ENCODE measurements at regions of chr12 and their contacts with region 1.

Region 1: GRCh38 chr12:108514973-108515814 is at the start of gene FICD:
- DNase-seq: peak; percentile 99
- H3K4me3 Mint-ChIP-seq: peak within 1 kb of the TSS; percentile 86
- H3K27ac Mint-ChIP-seq: peak within 1 kb of the TSS; percentile 78
- H3K4me1 Mint-ChIP-seq: peaks cover 27% of the 10 kb centered on the region
- H3K27me3 Mint-ChIP-seq: no peaks in the 10 kb centered on the region
- total RNA-seq, gene FICD: 5.8 and 7.1 TPM in 2 replicates

Region 2: DNA sequence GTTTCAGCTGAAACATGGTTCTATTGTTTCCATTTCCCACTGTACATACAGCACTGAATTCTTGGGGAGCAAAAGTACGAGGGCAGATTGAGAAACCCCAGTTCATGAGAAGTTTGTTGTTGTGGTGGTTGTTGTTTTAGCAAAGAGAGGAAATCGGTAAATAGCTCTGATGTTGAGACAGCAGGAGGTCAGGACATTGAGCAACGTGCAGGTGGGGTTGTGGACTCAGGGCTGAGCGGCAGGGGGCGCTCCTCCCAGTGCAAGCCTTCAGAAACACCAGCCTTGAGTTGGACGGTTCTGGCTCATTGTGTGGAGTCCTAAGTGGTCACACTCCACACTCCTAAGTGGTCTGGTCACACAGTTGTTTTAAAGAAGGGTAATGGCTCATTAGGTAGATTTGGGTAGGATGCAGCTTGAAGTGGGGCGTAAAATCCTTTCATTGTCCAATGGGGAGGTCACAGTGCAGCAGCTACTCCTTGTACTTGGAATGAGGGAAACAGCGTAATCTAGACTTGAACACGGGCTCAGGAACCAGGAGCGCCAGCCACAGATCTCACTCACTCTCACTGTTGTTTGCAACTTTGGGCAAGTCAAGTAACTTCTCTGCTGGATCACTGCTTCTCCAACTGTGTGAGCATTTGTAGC is 844.1 kb before region 1 on chr12:
- intact Hi-C with region 1: loop called (anchors 10 kb)
- DNase-seq: peak; percentile 25
- H3K4me3 Mint-ChIP-seq: no peak overlapping the region
- H3K27ac Mint-ChIP-seq: no peak overlapping the region
- H3K4me1 Mint-ChIP-seq: peaks cover 3% of the 10 kb centered on the region
- H3K27me3 Mint-ChIP-seq: peaks cover 15% of the 10 kb centered on the region

Region 3: GRCh38 chr12:107992870-107993451 is 522.2 kb before region 1 on chr12:
- intact Hi-C with region 1: loop called (anchors 5 kb)
- DNase-seq: no peak
- H3K4me3 Mint-ChIP-seq: no peak overlapping the region
- H3K27ac Mint-ChIP-seq: no peak overlapping the region
- H3K4me1 Mint-ChIP-seq: no peaks in the 10 kb centered on the region
- H3K27me3 Mint-ChIP-seq: peaks cover 16% of the 10 kb centered on the region

Region 4: DNA sequence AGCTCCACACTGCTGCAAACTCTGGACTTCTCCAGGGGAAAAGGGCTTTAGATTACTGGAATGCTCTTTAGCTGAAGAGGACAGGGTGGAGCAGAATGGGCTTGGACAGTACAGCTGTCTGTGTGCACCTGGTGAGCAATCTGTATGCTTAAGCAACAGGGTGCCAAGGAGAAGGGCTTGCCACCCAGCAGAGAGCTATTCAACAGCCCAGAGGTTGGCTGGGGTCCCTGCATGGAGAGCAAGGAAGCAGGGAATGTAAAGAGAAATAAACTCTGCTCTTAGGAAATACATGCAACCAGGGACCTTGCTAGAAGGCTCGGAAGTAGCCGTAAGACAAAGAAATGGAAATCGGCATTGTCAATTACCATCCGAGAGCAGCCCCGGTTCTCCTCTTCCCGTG is 269.1 kb after region 1 on chr12:
- intact Hi-C with region 1: no loop called
- DNase-seq: no peak
- H3K4me3 Mint-ChIP-seq: no peak overlapping the region
- H3K27ac Mint-ChIP-seq: no peak overlapping the region
- H3K4me1 Mint-ChIP-seq: no peaks in the 10 kb centered on the region
- H3K27me3 Mint-ChIP-seq: no peaks in the 10 kb centered on the region

Region 5: GRCh38 chr12:109573029-109573913 is 1058.1 kb after region 1 on chr12 and contains the starts of genes MMAB and MVK:
- intact Hi-C with region 1: loop called (anchors 5 kb)
- DNase-seq: peak; percentile 99
- H3K4me3 Mint-ChIP-seq: peak within 1 kb of the TSS; percentile 93
- H3K27ac Mint-ChIP-seq: peak within 1 kb of the TSS; percentile 92
- H3K4me1 Mint-ChIP-seq: peaks cover 30% of the 10 kb centered on the region
- H3K27me3 Mint-ChIP-seq: no peaks in the 10 kb centered on the region
- total RNA-seq, gene MMAB: 56.7 and 59.0 TPM in 2 replicates
- total RNA-seq, gene MVK: 28.7 and 33.6 TPM in 2 replicates